AG04449 (cell line): ENCODE measurements at regions of chr1 and their contacts with region 1.

Region 1: GRCh38 chr1:26695356-26696118 is at the start of gene ARID1A:
- DNase-seq: peak; percentile 85
- H3K4me3 ChIP-seq: peak within 1 kb of the TSS; percentile 69
- CTCF ChIP-seq: no peak

Region 2: DNA sequence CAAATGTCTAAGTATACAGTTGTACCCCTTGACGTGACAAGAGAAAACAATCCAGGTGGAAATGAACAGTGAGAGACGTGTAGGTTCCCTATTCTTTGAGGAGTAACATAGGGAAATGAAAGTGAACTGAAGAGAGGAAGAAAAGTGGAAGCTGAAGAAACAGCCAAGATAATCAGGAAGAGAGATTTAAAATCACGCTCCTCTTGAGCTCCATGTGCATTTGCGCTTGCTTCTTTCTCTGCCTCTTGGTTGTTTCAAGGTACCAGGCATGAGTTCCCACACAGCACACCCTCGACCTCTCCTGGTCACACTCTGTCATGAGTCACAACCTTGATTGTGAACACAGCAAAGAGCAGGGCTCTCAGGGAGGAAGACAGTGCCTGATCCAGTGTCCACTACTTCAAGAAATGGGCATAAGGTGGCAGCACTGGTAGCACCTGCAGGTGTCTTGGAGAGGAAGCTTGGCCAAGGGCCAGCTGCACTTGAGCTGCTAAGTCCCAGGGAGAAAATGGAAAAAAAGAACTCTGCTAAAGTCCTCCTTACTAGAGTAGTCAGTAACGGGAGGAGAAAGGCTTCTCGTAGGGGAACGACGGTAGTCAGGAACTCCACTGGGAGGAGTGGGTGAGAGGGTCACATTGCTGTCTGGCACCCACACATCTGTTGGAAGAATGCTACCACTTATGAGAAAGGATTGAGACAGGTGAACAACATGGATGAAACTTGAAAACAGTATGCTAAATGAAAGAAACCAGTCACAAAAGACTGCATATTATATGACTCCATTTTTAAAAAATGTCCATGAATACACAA is 18.0 kb before region 1 on chr1:
- CTCF ChIA-PET with region 1: interaction called, 34 read pairs
- POLR2A ChIA-PET with region 1: interaction called, 3 read pairs
- DNase-seq: no peak
- H3K4me3 ChIP-seq: no peak overlapping the region
- CTCF ChIP-seq: peak; percentile 43

Region 3: DNA sequence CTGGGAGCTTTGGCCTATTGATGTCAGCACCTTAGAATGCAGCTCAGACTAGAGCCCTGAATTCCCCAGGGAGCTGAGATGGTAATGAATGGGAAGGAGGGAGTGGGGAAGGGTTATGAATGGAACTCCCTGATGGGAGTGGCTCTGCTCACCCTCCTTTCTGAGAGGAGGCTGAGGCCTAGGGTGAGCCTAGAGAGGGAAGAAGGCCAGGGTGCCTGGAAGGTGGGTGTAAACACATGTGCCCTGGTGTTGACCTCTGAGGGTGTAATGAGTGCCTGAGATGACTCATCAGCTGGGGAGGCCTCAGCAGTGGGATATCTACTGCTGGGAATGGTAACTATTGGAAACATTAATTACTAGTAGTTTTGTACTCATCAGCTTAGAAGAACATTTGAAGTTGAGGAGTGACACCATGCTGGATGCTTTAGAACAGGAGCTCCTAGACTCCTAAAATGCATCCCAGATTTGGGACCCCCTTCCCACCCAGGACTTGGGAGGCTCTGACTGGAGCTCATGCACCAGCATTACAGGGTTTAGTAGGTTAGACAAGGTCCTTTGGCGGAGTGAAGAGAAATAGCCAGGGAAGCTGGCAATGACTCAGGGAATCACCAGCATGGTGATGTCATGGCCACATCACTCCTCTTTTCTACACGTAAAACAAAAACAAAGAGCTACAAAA is 76.2 kb after region 1 on chr1:
- CTCF ChIA-PET with region 1: interaction called, 3 read pairs
- POLR2A ChIA-PET with region 1: interaction called, 10 read pairs
- DNase-seq: peak; percentile 95
- H3K4me3 ChIP-seq: no peak overlapping the region
- CTCF ChIP-seq: no peak